Heart left ventricle (tissue), 16 donors: ENCODE measurements at regions of chr1 and their contacts with region 1.

Region 1: DNA sequence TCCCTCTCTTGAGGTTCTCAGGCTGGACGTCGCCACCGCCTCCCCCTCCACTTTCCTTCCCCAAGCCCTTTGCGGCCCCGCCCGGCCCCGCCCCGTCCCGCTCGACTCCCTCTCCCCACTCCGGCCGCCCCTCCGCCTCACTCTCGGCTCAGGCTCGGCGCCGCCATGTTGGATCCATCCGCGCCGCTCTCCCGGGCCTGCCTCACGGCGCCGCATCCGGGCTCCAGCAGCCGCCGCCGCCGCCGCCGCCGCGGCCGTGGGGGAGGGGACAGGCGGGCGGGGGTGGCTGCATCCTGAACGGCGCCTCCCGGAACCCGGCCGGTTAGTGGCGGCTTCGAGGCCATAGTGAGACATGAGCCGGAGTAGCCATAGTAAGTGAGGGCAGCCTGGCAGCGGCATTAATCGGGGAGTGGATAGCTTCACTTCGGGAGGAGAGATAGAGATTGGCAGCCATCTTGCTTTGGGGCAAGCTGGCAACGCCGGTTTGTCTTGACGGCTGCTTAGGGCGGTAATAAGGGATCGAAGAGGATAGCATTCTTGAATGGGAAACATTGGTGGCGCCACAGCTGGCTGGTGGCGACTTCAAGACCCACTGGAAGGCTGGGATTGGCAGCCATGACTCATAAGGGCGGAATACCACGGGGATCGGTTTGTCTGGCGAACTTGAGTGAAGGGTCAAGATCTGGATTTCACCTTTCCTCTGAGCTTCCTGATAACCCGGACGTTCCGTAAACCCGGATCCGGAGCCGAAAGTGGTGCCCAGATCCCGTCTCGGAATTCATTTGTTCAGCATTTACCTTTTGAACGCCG is at the start of gene DEDD:
- DNase-seq: peak; percentile 95 to 97 (median 96)
- ATAC-seq: peak; percentile 93 to 97 (median 96)
- H3K4me3 ChIP-seq: peak within 1 kb of the TSS; percentile 42 to 92 (median 71)
- H3K27ac ChIP-seq: peak within 1 kb of the TSS; percentile 87 to 99 (median 97)
- H3K4me1 ChIP-seq: peaks cover 5 to 74% (median 41%) of the 10 kb centered on the region in 12 donors
- H3K27me3 ChIP-seq: no peaks in the 10 kb centered on the region
- CTCF ChIP-seq: peak in 3 of 12 donors; percentile 9 to 30 (median 22)
- POLR2A ChIP-seq: peak in 1 of 2 donors; percentile 48
- total RNA-seq, gene DEDD: 20.8 to 36.0 (median 26.5) TPM

Region 2: DNA sequence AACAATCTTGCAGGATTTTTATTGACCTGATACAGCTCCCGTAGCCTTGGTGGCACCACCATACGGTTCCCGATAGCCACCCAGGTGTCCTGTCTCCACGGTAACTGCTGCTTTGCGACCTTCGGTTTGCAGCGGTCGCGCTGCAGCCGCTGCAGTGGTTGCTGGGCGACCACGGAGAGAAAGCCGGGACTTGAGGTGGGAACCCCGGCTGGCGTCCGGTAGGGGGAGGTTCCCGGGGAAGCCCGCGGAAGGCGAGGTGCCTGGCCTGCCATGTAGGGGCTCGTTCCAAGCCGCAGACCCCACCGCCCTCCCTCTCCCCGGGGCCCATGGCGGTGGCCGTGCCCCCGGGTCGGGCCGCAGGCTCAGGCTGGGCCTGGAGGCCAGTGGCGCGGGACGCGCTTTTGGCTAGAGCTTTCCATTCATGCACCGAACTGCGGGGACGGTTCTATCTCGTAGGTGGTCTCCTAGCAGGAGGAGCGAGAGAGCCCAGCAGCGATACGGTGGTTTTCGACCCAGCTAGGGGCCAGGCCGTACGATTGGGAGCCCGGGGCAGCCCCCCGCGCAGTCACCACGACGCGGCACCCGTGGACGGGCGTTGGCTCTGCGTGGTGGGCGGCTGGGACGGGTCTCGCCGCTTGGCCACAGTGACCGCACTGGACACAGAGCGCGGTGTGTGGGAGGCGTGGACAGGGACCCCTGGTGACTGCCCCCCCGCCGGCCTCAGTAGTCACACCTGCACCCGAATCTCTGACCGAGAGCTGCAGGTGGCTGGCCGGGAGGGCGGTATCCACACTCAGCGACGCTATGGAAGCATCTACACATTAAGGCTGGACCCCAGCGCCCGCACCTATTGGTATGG is 34.2 kb before region 1 on chr1 and contains the start of gene KLHDC9:
- intact Hi-C with region 1: loop called in 2 of 10 experiments (anchors 1 to 2 kb)
- DNase-seq: peak; percentile 79 to 88 (median 82)
- ATAC-seq: peak; percentile 80 to 90 (median 84)
- H3K4me3 ChIP-seq: peak within 1 kb of the TSS; percentile 49 to 81 (median 64)
- H3K27ac ChIP-seq: peak within 1 kb of the TSS in 11 of 12 donors; percentile 40 to 83 (median 71)
- H3K4me1 ChIP-seq: peaks cover 2 to 35% (median 17%) of the 10 kb centered on the region in 12 donors
- H3K27me3 ChIP-seq: no peaks in the 10 kb centered on the region
- CTCF ChIP-seq: peak in 1 of 12 donors; percentile 15
- POLR2A ChIP-seq: no peak
- total RNA-seq, gene KLHDC9: 2.4 to 13.3 (median 6.1) TPM

Region 3: DNA sequence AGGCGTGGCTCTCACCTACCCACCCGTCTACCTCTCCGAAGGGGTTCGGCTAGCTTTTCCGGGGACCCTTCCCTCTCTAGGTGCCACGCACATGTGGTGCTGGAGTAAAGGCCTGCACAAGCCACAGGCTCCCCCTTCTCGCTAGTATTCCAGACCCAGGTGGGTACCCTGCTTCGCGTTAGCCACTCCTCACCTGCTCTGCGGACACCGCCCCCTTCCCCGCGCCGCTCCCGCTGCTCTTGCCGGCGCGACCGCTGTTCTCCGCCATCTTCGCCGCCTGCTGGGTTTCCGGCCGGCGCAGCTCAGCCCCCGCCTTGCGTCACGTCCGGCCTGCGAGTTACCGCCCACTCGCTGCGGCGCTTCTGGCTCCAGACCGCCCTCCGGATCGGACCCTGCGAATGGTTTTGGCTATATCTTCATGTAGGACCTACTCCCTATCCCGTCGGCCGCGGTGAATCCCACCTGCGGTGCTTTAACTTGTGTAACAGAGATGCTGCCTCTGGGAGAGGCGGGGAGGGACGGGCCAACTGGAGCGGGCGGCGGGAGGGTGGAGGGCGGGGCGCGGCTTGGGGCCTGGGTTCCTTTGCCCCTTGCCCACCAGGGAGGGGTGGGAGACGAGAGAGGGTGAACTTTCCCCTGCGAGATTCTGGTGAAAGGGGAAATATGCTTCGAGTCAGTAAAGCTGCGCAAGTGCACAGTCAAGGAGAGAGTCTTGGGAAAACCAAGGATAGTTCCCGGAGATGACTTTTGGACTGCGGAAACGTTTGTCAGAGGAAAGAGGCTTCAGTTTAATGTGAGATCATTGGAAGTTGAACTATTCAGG is 14.6 kb before region 1 on chr1 and contains the starts of genes NIT1 and PFDN2:
- intact Hi-C with region 1: loop called in 4 of 10 experiments (anchors 1 to 2 kb)
- DNase-seq: peak; percentile 90 to 92 (median 90)
- ATAC-seq: peak; percentile 86 to 94 (median 90)
- H3K4me3 ChIP-seq: peak within 1 kb of the TSS; percentile 73 to 100 (median 94)
- H3K27ac ChIP-seq: peak within 1 kb of the TSS; percentile 77 to 97 (median 92)
- H3K4me1 ChIP-seq: peaks cover 5 to 84% (median 45%) of the 10 kb centered on the region in 12 donors
- H3K27me3 ChIP-seq: no peaks in the 10 kb centered on the region
- CTCF ChIP-seq: peak in 3 of 12 donors; percentile 12 to 19 (median 13)
- POLR2A ChIP-seq: peak; percentile 16 to 78
- total RNA-seq, gene NIT1: 28.1 to 42.7 (median 34.7) TPM
- total RNA-seq, gene PFDN2: 38.3 to 59.1 (median 49.4) TPM

Region 4: DNA sequence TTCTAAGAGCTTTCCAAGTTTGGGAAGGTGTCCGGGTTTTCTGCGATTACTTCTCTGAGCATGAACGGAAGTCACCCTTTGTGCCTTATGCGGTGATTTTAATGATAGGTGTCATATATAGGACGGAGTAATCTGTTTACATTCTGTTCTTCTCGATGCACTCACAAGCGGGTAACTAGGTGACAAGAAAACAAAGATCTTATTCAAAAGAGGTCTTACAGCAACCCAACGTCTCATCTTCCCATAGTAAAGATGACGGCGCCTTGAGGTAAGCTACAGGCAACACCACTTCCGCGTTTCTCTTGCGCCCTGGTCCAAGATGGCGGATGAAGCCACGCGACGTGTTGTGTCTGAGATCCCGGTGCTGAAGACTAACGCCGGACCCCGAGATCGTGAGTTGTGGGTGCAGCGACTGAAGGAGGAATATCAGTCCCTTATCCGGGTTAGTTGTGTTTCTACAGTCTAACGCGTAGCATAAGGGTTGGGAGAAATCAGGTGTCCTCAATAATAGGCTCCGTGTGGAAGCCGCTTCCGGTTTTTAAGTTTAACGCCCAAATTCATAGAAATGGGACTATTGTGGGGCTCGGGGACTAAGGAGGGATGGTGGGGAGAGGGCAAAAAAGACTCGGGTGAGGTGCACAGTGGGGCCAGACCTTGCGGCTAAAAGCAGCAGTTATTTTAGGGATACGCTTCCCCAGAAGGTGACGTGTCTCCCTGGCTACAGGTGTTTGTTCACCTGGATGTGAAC is 21.2 kb after region 1 on chr1 and contains the start of gene UFC1:
- intact Hi-C with region 1: loop called in 1 of 10 experiments (anchors 1 kb)
- DNase-seq: peak; percentile 80 to 87 (median 84)
- ATAC-seq: peak; percentile 90 to 95 (median 94)
- H3K4me3 ChIP-seq: peak within 1 kb of the TSS; percentile 59 to 93 (median 80)
- H3K27ac ChIP-seq: peak within 1 kb of the TSS; percentile 79 to 99 (median 94)
- H3K4me1 ChIP-seq: peaks cover 0 to 27% (median 12%) of the 10 kb centered on the region in 12 donors
- H3K27me3 ChIP-seq: no peaks in the 10 kb centered on the region
- CTCF ChIP-seq: no peak
- POLR2A ChIP-seq: peak in 1 of 2 donors; percentile 33
- total RNA-seq, gene UFC1: 54.4 to 86.9 (median 73.2) TPM